ENCODE measurements at regions of chr19 and their contacts with region 1.

Region 1: DNA sequence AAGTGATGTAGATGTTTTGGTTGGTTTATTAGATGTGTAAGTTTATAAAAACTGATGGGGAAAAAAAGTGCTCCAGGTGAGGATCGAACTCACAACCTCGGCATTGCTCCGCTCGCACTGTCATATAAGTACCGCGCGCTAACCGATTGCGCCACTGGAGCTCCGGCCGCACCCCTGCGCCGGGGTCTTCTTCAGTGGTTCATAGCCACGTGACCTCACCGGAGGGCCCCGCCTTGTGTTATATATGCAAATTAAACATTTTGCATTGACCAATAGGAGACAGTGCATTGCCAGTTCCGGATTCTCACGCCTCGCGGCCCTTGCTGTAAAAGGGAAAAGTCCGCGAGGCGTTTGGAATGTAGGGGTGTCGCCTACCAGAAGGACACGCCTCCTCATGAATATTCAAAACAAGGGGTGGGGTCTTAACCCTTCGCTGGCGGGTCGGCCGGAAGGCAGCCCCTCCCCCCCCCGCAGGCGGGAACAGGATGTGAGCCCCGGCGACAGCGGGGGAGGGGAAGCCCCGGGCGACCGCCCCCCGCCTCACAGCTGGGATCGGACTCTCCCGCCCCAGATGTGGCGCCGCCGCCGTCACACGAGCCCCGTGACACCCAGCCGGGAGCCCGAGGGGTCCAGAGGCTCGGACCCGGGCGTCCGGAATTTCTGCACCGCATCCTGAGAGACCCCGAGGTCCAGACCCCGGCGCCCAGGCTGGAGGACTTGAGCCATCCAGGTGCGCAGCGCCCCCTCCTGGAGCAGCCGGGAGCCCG is at the start of gene PLEKHG2:
- H3K4me3 ChIP-seq: peak within 1 kb of the TSS; percentile 69
- H3K27ac ChIP-seq: peak within 1 kb of the TSS; percentile 91
- H3K4me1 ChIP-seq: peaks cover 38% of the 10 kb centered on the region
- CTCF ChIP-seq: peak; percentile 99

Region 2: DNA sequence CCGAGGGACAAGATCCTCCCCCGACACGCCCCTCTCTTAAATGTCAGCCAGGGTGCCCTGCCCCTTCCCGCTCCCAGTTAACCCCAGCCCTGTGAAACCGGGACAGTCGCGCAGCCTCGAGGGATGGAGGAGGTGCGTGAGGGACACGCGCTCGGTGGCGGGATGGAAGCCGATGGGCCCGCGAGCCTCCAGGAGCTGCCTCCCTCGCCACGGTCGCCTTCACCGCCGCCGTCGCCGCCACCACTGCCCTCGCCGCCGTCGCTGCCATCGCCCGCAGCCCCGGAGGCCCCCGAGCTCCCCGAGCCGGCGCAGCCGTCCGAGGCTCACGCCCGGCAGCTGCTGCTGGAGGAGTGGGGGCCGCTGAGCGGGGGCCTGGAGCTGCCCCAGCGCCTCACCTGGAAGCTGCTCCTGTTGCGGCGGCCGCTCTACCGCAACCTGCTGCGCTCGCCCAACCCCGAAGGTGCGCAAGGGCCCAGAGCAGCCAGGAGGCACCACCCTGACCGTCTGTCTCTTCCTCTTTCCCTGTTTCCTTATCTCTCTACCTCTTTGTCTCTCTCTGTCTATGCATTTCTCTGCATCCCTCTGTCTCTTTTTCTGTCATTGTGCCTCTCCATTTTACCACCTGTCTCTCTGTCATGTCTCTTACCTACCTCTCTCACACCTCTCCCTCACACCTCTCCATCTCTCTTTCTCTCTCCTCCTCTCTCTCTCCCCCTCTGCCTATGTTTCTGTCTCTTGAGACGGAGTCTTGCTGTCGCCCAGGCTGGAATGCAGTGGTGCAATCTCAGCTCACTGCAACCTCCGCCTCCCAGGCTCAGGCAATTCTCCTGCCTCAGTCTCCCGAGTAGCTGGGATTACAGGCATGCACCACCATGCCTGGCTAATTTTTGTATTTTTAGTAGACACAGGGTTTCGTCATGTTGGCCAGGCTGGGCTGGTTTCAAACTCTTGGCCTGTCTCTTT is 215.1 kb before region 1 on chr19 and contains the start of gene NCCRP1:
- CTCF ChIA-PET with region 1: no interaction called
- POLR2A ChIA-PET with region 1: no interaction called
- H3K4me3 ChIP-seq: no peak within 1 kb of the TSS
- H3K27ac ChIP-seq: no peak within 1 kb of the TSS
- H3K4me1 ChIP-seq: no peaks in the 10 kb centered on the region
- CTCF ChIP-seq: no peak

Region 3: GRCh38 chr19:39347332-39348164 is 64.7 kb before region 1 on chr19:
- CTCF ChIA-PET with region 1: interaction called, 10 read pairs
- POLR2A ChIA-PET with region 1: interaction called, 4 read pairs
- H3K4me3 ChIP-seq: no peak overlapping the region
- H3K27ac ChIP-seq: peak overlapping the region; percentile 26
- H3K4me1 ChIP-seq: peaks cover 48% of the 10 kb centered on the region
- CTCF ChIP-seq: no peak

Region 4: GRCh38 chr19:39390755-39391592 is 21.3 kb before region 1 on chr19 and contains the starts of genes MED29 and PAF1:
- CTCF ChIA-PET with region 1: interaction called, 144 read pairs
- POLR2A ChIA-PET with region 1: interaction called, 175 read pairs
- H3K4me3 ChIP-seq: peak within 1 kb of the TSS; percentile 68
- H3K27ac ChIP-seq: peak within 1 kb of the TSS; percentile 97
- H3K4me1 ChIP-seq: peaks cover 17% of the 10 kb centered on the region
- CTCF ChIP-seq: peak; percentile 100

Region 5: GRCh38 chr19:39397360-39398296 is 14.7 kb before region 1 on chr19:
- CTCF ChIA-PET with region 1: interaction called, 144 read pairs
- POLR2A ChIA-PET with region 1: interaction called, 175 read pairs
- H3K4me3 ChIP-seq: no peak overlapping the region
- H3K27ac ChIP-seq: peak overlapping the region; percentile 3; the same call in 1 of the 2 replicates
- H3K4me1 ChIP-seq: peaks cover 10% of the 10 kb centered on the region
- CTCF ChIP-seq: peak; percentile 100

Region 6: DNA sequence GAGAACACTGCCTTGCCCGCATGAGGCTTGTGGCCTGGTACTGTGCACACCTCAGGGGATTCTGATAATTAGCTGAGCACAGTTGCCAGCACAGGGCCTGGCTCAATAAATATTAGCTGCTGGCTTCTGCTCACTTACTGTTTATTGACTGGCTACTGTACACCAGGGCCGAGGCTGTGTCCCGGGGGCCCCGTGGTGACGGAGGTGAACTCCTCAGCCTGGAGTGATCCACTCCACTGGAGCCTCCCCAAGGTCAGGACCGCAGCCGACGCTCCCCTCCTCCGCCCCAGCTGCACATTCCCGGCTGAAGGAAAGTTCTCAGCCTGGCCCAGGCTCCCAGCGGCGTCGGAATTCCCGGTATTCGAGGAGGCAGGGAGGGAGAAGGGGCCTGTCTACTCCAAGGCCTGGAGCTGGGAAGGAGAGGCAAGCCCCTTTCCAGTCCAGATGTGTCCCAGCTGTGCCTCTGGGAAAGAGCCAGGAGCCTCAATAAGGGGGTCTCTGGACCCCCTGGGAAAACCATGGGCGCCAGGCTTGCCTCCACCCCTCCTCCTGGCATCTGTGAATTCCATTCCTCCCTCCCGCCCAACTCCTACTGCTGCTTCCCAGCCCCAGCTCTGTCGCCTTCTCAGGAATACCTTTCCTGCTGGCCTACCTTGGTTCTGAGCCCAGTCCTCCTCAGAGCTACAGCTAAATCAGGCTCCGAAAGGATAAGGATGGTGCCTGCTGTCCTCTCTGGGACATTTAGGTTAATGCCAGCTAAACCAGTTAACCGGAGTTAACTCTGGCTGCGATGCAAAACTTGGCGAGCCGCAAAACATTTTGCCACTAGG is 16.2 kb after region 1 on chr19:
- CTCF ChIA-PET with region 1: interaction called, 16 read pairs
- POLR2A ChIA-PET with region 1: interaction called, 31 read pairs
- H3K4me3 ChIP-seq: no peak overlapping the region
- H3K27ac ChIP-seq: peak overlapping the region; percentile 40; the same call in 1 of the 2 replicates
- H3K4me1 ChIP-seq: peaks cover 10% of the 10 kb centered on the region
- CTCF ChIP-seq: no peak; the same call in 1 of the 2 replicates

Region 7: GRCh38 chr19:39532233-39533002 is 120.1 kb after region 1 on chr19 and contains the start of gene EID2B:
- CTCF ChIA-PET with region 1: interaction called, 15 read pairs
- POLR2A ChIA-PET with region 1: interaction called, 3 read pairs
- H3K4me3 ChIP-seq: peak within 1 kb of the TSS; percentile 88
- H3K27ac ChIP-seq: peak within 1 kb of the TSS; percentile 85
- H3K4me1 ChIP-seq: peaks cover 20% of the 10 kb centered on the region
- CTCF ChIP-seq: peak; percentile 100